Right lobe of liver (tissue), 6 donors: ENCODE measurements at regions of chr13 and their contacts with region 1.

Region 1: GRCh38 chr13:36261976-36262375 is 35.6 kb downstream of the CCDC169 start:
- DNase-seq: no peak
- ATAC-seq: no peak
- H3K4me3 ChIP-seq: no peak overlapping the region
- H3K27ac ChIP-seq: no peak overlapping the region
- H3K4me1 ChIP-seq: no peaks in the 10 kb centered on the region
- H3K27me3 ChIP-seq: no peaks in the 10 kb centered on the region
- CTCF ChIP-seq: no peak
- POLR2A ChIP-seq: no peak

Region 2: DNA sequence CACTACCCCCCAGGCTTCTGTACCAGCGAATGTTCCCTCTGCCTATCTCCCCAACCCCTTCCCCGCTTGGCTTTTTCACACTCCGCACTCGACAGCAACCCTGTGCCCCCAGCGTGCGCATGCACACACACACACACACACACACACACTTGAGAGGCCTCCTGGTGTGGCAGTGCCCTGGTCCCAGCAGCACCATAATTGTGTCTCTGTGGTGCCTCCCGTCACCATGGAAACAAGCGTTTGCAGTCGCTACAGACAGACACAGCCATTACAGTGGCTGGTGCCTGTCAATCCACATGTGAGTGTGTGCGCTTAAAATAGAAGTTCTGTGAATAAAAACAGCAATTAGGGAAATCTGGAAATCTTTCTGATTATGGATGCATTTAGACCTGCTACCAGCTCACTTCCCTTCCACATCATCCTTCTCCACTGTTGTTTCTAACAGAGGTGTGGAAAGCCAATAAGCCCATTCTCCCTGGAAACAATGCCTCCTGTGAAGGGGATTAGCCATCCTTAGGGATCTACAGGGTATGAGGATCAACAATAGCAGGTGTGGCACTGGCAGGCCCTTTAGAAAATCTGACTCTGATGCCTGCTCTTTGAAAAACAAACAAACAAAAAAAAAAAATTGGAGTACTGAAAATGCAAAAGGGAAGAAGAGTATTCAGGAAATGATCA is 277.1 kb before region 1 on chr13:
- intact Hi-C with region 1: loop called in 1 of 2 experiments (anchors 10 kb)
- DNase-seq: no peak
- ATAC-seq: no peak
- H3K4me3 ChIP-seq: no peak overlapping the region
- H3K27ac ChIP-seq: no peak overlapping the region
- H3K4me1 ChIP-seq: no peaks in the 10 kb centered on the region
- H3K27me3 ChIP-seq: no peaks in the 10 kb centered on the region
- CTCF ChIP-seq: no peak
- POLR2A ChIP-seq: no peak